Activated B cell treated with CpG ODN at 0.5 μM for 24 hours (primary cell): ENCODE measurements at regions of chr16 and their contacts with region 1.

Region 1: GRCh38 chr16:22098405-22099255 is 6.3 kb downstream of the VWA3A start:
- DNase-seq: no peak
- ATAC-seq: peak; percentile 58
- H3K4me3 Mint-ChIP-seq: no peak overlapping the region
- H3K27ac Mint-ChIP-seq: no peak overlapping the region
- H3K4me1 Mint-ChIP-seq: peaks cover 4% of the 10 kb centered on the region
- H3K27me3 Mint-ChIP-seq: peaks cover 17% of the 10 kb centered on the region
- CTCF ChIP-seq: no peak

Region 2: DNA sequence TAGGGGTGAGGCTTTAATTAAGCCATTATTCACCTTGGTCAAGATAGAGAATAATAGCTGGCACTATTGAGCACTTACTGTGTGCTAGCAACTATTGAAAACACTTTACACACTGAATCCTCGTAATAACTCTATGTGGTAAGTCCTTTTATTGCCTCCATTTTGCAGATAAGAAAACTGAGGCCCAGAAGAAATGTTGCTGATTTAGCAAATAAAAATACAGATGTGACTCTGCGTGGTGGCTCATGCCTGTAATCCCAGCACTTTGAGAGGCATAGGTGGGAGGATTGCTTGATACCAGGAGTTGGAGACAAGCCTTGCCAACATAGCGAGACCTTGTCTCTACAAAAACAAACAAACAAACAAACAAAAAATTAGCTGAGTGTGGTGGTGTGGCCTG is 415.4 kb before region 1 on chr16:
- CTCF ChIA-PET with region 1: no interaction called
- POLR2A ChIA-PET with region 1: no interaction called
- intact Hi-C with region 1: no loop called
- DNase-seq: no peak
- ATAC-seq: no peak
- H3K4me3 Mint-ChIP-seq: no peak overlapping the region
- H3K27ac Mint-ChIP-seq: no peak overlapping the region
- H3K4me1 Mint-ChIP-seq: peaks cover 4% of the 10 kb centered on the region
- H3K27me3 Mint-ChIP-seq: peaks cover 17% of the 10 kb centered on the region
- CTCF ChIP-seq: no peak

Region 3: GRCh38 chr16:22001591-22001990 is 97.0 kb before region 1 on chr16:
- CTCF ChIA-PET with region 1: interaction called, 4 read pairs
- POLR2A ChIA-PET with region 1: no interaction called
- intact Hi-C with region 1: loop called (anchors 1 kb)
- DNase-seq: no peak
- ATAC-seq: no peak
- H3K4me3 Mint-ChIP-seq: no peak overlapping the region
- H3K27ac Mint-ChIP-seq: no peak overlapping the region
- H3K4me1 Mint-ChIP-seq: peaks cover 10% of the 10 kb centered on the region
- H3K27me3 Mint-ChIP-seq: no peaks in the 10 kb centered on the region
- CTCF ChIP-seq: no peak

Region 4: DNA sequence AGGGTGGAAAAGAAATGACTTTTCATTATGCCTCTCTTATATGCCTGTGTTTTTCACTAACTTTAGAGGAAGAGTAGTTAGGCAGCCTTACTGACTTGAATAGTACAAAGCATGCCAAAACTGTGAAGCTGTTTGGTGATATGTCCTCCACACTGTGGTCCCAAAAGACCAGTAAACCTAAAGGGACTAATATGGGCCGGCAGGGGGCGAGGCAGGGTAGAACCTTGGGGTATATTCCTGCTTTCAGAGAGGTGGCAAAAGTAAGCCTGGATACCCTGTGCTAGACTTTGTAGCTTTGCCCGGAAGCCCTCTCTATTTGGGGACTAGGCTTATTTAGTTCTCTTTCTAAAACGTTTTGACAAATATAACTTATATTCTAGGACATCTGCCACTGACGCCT is 42.8 kb before region 1 on chr16:
- CTCF ChIA-PET with region 1: no interaction called
- POLR2A ChIA-PET with region 1: no interaction called
- intact Hi-C with region 1: no loop called
- DNase-seq: no peak
- ATAC-seq: no peak
- H3K4me3 Mint-ChIP-seq: no peak overlapping the region
- H3K27ac Mint-ChIP-seq: no peak overlapping the region
- H3K4me1 Mint-ChIP-seq: peaks cover 9% of the 10 kb centered on the region
- H3K27me3 Mint-ChIP-seq: no peaks in the 10 kb centered on the region
- CTCF ChIP-seq: no peak